Transverse colon (tissue), 4 donors: ENCODE measurements at regions of chr7 and their contacts with region 1.

Region 1: DNA sequence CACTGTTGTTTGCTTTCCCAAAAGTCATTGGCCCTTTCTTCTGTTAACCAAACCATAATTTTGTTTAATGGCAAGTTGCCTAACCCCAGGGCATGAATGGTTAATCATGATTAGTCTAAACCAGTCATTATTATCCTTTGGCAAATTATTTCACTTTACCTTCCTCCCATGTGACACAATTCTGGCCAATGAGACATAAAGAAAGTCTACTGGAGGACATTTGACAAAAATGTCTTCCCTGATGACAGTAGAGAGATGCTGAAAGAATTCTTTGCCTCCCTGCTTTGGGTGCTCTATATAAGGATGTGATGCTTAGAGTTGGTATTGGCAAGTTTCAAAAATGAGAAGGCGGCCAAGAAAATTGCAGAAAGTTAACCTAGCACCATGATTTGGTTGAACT is 101.9 kb downstream of the PODXL start:
- DNase-seq: no peak
- H3K4me3 ChIP-seq: no peak overlapping the region
- H3K27ac ChIP-seq: no peak overlapping the region
- H3K4me1 ChIP-seq: no peaks in the 10 kb centered on the region
- H3K27me3 ChIP-seq: no peaks in the 10 kb centered on the region
- CTCF ChIP-seq: no peak
- EP300 ChIP-seq: no peak
- POLR2A ChIP-seq: no peak

Region 2: GRCh38 chr7:131476740-131477139 is 22.2 kb after region 1 on chr7:
- in situ Hi-C with region 1: no loop called
- intact Hi-C with region 1: loop called (anchors 2 kb)
- DNase-seq: no peak
- H3K4me3 ChIP-seq: no peak overlapping the region
- H3K27ac ChIP-seq: no peak overlapping the region
- H3K4me1 ChIP-seq: no peaks in the 10 kb centered on the region
- H3K27me3 ChIP-seq: no peaks in the 10 kb centered on the region
- CTCF ChIP-seq: no peak
- EP300 ChIP-seq: no peak
- POLR2A ChIP-seq: no peak